ENCODE measurements at regions of chr5 and their contacts with region 1.

Region 1: DNA sequence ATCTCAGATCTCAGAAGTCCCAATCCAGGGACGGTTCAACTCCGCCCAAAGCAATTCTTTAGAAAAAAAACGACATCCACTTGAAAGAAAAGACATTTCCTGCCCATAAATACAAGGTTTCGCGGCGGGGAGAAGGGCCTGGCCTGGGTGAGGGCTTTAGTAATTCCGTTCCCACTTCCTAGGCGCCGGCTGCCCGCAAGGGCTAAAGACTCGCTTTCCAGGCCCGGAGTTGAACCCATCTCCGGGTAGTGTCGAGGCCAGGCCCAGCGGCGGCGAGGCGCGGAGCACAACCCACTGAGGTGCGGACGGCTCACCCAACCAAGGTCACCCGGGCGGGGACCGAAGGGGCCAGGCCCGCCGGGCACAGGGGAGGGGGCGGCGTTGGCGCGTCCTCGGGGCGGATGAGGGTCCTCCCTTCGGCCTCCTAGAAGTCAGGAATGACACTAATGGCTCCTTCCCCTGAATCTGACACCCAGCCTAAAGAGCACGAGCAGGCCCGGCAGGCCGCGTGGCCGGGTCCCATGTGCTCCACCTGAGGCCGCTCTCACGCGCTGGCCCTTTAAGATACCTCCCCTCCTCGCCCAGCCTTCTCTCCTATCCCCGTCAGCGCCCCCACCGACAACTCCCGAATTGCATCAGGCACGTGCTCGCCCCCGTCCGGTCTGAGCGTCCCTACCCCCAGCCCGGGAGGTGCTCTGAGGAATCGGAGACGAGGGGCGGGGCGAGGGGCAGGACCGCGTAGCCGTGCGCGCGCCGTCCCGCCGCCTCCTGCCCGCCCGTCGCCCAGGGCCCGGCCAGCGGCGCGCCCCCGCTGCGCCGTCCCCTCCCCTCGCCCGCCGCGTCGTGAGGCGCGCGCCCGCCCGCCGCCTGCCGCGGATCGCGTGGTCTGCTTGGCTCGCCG is 467 bp upstream of the LARP1 start:
- DNase-seq: peak; percentile 96 to 100
- H3K4me3 ChIP-seq: peak overlapping the region; percentile 79 to 90
- H3K27ac ChIP-seq: peak overlapping the region; percentile 94 to 96
- H3K4me1 ChIP-seq: peaks cover 10 to 30% of the 10 kb centered on the region in 2 donors
- H3K27me3 ChIP-seq: no peaks in the 10 kb centered on the region
- CTCF ChIP-seq: peak; percentile 32 to 43 (median 41)

Region 2: GRCh38 chr5:154445422-154446182 is 309.1 kb before region 1 on chr5 and contains the start of gene SAP30L:
- intact Hi-C with region 1: loop called (anchors 5 kb)
- DNase-seq: peak; percentile 96 to 99
- H3K4me3 ChIP-seq: peak within 1 kb of the TSS; percentile 97 to 99
- H3K27ac ChIP-seq: peak within 1 kb of the TSS; percentile 86 to 92
- H3K4me1 ChIP-seq: peaks cover 4 to 24% of the 10 kb centered on the region in 2 donors
- H3K27me3 ChIP-seq: no peaks in the 10 kb centered on the region
- CTCF ChIP-seq: no peak
- total RNA-seq, gene SAP30L: 36.5 TPM

Region 3: DNA sequence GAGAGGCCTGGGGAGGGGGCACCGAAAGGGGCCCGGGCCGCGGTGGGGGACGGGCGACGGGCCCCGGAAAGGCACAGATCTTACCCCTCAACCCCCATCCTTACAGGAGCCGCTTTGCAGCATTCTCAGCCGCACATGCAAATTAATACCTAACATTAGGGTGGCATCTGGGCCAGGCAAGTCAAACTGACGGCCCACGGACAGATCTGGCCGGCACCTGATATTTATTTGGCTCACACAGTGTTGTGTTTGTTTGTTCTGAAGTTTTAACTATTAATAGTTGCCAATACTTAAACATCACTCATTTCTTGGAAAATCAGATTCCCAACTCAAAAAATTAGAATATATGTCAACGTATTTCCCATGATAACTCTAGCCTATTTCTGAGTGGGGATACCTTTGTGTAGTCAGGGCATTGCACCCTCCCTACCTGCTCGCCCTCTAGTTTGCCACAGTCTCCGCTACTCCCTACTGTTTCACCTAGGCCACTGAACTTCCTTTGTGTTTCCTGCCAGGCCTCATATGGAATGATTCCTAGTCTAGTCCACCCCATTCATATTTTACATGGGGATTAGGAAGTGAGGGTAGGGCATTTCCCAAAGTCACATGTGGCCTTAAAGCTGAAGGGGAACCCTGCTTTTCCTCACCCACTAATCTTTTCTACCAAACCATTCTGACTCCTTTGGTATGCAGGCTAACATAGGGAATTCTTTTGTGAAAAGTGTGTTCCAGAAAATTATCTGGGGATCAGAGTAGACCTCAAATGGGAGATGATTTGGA is 71.4 kb before region 1 on chr5:
- intact Hi-C with region 1: loop called (anchors 1 kb)
- DNase-seq: no peak
- H3K4me3 ChIP-seq: peak overlapping the region; percentile 55 to 80
- H3K27ac ChIP-seq: peak overlapping the region; percentile 65 to 77
- H3K4me1 ChIP-seq: peaks cover 5 to 10% of the 10 kb centered on the region in 2 donors
- H3K27me3 ChIP-seq: no peaks in the 10 kb centered on the region
- CTCF ChIP-seq: no peak

Region 4: DNA sequence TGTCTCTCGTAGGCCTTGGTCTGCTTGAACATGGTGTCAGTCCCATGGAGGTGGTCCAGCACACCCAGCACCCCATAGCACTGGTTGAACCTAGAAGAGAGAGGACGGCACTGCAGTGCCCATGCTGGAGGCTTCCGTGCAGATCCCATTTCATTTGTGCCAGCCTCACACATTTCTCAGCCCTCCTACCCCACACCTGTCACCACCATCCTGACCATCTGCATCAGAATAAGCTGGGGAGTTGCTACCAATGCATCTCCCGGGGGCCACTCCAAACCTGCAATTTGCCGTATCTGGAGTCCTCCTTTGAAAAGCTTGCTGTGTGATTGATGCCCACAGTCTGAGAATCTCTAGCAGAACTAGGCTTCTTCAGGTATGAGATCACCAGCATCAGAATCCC is 65.7 kb after region 1 on chr5:
- intact Hi-C with region 1: no loop called
- DNase-seq: no peak
- H3K4me3 ChIP-seq: no peak overlapping the region
- H3K27ac ChIP-seq: no peak overlapping the region
- H3K4me1 ChIP-seq: no peaks in the 10 kb centered on the region
- H3K27me3 ChIP-seq: no peaks in the 10 kb centered on the region
- CTCF ChIP-seq: no peak

Region 5: GRCh38 chr5:154834053-154834452 is 79.3 kb after region 1 on chr5:
- intact Hi-C with region 1: loop called (anchors 2 kb)
- DNase-seq: no peak
- H3K4me3 ChIP-seq: no peak overlapping the region
- H3K27ac ChIP-seq: peak overlapping the region; percentile 66 to 75
- H3K4me1 ChIP-seq: peaks cover 0 to 13% of the 10 kb centered on the region in 2 donors
- H3K27me3 ChIP-seq: no peaks in the 10 kb centered on the region
- CTCF ChIP-seq: no peak

Region 6: DNA sequence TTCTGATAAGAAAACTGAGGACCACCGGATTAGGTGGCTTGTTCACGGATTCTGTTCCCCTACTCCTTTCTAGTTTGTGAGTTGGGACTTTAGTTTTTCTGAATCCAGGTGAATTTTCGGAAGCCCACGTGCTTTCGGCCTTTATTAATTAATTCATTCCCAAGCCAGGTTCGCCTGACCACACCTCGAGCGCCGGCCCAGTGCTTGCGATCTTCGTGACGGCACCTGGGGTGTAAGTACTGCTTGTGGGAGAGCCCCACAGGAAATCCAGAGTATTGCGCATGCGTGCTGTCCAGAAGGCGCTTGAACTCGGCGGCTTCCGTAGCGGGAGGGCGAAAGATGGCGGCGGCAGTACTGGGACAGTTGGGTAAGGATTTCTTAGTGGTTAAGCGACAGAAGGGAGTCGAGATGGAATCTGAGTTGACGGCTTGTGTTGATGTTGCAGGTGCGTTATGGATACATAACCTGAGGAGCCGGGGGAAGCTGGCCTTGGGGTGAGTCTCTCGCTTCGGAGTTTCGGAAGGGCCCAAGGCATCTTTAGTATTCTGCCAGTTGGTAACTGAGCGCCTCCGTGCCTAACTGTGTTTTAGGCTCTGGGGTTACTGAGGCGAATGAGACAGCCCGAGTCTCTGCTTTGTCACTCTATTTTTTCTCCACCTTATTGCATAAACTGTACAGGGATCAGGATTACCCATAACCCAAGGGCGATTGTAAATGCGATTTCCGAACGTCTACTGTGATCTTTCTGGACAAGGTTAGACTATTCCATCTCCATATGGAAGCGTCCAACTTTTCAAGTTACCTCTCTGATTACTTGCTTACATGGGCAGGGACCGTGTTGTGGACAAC is 186.3 kb after region 1 on chr5 and contains the start of gene MRPL22:
- intact Hi-C with region 1: loop called (anchors 5 kb)
- DNase-seq: peak; percentile 59 to 94
- H3K4me3 ChIP-seq: peak within 1 kb of the TSS; percentile 61 to 89
- H3K27ac ChIP-seq: peak within 1 kb of the TSS; percentile 66 to 69
- H3K4me1 ChIP-seq: peaks cover 4 to 25% of the 10 kb centered on the region in 2 donors
- H3K27me3 ChIP-seq: no peaks in the 10 kb centered on the region
- CTCF ChIP-seq: peak in 1 of 3 experiments; percentile 4
- total RNA-seq, gene MRPL22: 7.8 TPM

Measured in ascending aorta (tissue), 2 donors.